Body of pancreas (tissue), 4 donors: ENCODE measurements at regions of chr2 and their contacts with region 1.

Region 1: DNA sequence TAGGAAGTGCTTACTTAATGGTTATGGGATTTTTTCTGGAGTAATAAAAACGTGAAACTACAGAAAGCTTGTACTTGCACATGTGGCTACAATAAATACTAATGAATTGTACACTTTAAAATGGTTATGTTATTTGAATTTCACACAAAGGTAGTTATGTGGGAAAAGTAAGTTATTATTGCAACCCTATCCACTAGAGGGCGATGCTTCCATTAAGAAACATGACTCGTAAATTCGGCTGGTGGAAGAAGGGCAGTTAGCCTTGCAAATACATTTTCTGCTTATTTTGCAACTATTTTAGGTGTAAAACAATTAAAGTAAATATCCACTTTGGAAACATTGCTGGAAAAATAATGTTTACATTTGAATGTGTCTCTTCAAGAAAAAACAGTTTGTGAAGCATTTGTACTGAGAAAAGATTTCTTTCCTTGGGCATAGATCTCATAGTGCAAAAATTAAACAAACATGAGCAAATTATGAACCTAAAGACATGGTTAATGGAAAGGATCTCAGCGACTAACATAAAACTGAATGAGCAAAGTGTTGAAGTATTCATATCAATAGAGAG is 68.1 kb upstream of the CSRNP3 start:
- DNase-seq: peak in 3 of 4 donors; percentile 9 to 48 (median 20)
- ATAC-seq: peak; percentile 71
- H3K4me3 ChIP-seq: no peak overlapping the region
- H3K27ac ChIP-seq: no peak overlapping the region
- H3K4me1 ChIP-seq: no peaks in the 10 kb centered on the region
- H3K27me3 ChIP-seq: no peaks in the 10 kb centered on the region
- CTCF ChIP-seq: peak in 6 of 7 experiments; percentile 58 to 83 (median 74)
- POLR2A ChIP-seq: no peak

Region 2: DNA sequence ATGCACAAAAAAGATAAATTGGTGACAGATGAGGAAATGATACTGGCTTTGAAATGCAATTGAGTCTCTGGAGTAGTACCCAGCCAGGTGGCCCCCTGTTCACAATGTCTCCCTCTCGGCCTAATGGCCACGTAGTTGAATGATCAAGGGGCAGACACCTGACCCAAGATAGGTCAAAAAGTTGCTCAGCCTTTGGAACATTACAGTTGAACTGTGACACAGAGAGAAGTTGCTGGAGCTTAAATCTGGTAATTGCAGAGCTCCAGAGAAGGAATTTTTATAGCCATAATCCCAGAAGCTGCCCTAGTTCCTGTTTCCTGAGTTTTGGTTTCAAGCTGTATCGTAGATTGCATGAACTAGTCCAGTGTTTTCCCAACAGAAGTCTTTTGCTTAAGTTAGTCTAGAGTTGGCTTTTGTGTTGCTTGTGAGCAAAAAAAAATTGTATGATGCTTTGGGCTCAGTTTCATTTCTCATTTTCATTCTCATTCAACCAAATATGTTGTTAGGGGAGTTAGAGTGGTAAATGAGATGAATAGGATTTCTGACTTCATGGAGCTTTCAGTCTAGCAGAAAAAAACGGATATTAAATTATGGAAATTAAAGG is 186.1 kb after region 1 on chr2:
- intact Hi-C with region 1: no loop called
- DNase-seq: no peak
- ATAC-seq: no peak
- H3K4me3 ChIP-seq: no peak overlapping the region
- H3K27ac ChIP-seq: no peak overlapping the region
- H3K4me1 ChIP-seq: no peaks in the 10 kb centered on the region
- H3K27me3 ChIP-seq: no peaks in the 10 kb centered on the region
- CTCF ChIP-seq: no peak
- POLR2A ChIP-seq: no peak

Region 3: DNA sequence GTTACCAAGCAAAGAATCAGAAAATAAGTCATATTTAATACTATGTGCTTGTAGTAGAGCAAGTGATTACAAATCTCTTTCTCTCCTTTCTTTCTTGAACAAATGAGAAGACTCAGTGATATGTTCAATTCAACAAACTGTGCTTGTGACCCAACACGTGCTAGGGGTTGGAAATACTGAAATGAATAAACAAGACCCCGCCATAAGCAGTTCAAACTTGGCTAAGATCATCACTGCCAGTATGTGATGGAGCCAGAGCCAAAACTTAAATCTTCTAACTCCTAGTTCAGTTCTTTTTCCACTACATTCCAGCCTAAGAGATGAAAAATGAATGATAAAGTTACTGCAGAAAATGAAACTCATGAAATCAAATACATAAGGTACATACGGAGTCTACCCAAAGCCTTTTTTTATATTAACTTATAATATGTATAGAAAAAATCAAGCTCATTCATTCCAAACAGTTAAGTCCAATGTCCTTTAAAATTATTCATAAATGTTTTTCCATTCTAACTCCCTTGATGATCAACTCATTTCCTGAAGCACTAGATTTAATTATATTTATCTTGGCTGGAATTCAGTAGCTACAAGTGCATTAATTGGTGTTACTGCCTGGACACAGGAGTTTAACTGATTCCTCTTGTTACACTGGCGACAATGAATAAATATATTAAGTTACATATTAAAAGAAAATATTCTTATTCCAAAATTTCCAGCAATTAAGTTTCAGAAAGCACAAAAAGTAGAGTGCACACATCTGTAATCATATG is 356.7 kb after region 1 on chr2:
- intact Hi-C with region 1: loop called (anchors 10 kb)
- DNase-seq: no peak
- ATAC-seq: no peak
- H3K4me3 ChIP-seq: no peak overlapping the region
- H3K27ac ChIP-seq: no peak overlapping the region
- H3K4me1 ChIP-seq: peaks cover 21% of the 10 kb centered on the region
- H3K27me3 ChIP-seq: no peaks in the 10 kb centered on the region
- CTCF ChIP-seq: no peak
- POLR2A ChIP-seq: no peak

Region 4: DNA sequence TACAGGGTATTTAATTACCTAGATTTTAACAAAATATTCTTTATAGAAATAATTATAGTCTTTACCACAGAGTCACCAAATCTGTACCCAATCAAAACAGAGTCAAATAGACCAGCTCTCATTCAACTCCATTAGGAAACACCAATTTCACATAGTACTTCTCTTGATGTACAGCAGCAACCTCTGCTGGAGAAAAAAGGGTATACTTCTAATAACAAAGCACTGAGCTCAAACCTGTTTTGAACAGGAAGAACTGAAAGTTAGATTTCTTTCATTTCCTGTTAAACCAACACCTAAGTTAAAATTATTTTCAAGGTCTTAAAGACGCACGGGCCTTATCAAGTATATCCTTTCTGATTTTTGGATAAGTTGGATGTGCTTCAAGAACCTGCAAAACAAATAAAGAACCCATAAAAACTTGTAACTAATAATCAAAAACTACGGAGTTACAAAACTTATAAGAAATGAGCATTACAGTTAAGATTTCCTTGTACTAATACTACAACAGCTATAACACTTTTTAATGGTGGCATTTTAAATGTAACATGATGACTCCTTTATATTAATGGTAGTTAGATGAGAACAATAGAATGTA is 473.2 kb after region 1 on chr2:
- intact Hi-C with region 1: loop called (anchors 10 kb)
- DNase-seq: peak in 1 of 4 donors; percentile 46
- ATAC-seq: peak; percentile 94
- H3K4me3 ChIP-seq: no peak overlapping the region
- H3K27ac ChIP-seq: peak overlapping the region in 1 of 4 donors; percentile 34
- H3K4me1 ChIP-seq: no peaks in the 10 kb centered on the region
- H3K27me3 ChIP-seq: no peaks in the 10 kb centered on the region
- CTCF ChIP-seq: peak; percentile 40 to 89 (median 81)
- POLR2A ChIP-seq: no peak